HEK293T (cell line): ENCODE measurements at regions of chr4 and their contacts with region 1.

Region 1: DNA sequence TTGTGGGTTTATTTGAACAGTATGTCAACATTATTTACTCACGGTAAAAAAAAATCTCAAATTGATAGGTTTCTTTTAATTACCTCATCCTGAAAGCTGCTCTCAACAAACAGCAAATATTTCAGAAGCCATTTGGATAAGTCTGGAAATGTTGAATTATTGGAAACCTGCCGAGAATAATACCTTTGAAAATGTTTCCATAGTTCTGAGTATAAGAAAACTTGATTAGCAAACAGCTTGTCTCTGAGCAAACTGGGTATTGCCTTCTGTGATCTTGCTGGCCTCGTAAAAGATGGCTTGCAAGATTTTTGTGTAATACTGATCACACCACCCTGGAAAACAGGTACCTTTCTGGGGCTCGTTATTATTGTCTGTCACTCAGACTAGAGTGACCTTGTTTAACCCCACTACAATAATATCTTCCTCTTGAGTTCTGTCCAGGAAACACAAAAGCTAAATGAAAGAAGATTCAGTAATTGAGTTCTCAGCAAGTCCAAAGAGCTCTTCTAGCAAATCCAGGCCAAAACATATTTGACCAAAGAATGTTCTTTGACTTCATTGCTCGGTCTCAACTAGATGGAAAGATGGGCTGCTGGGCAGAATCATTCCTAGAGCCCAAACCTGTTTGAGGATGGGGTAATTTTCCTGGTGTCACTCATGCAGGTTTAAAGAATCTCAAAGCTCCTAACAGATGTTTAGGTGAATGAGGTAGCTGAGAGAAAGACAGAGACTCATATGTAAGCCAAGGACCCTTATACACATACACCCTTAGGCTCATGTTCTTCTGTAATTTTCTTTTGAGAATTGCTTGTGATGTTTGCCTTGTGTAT is 255.6 kb upstream of the JADE1 start:
- DNase-seq: no peak

Region 2: DNA sequence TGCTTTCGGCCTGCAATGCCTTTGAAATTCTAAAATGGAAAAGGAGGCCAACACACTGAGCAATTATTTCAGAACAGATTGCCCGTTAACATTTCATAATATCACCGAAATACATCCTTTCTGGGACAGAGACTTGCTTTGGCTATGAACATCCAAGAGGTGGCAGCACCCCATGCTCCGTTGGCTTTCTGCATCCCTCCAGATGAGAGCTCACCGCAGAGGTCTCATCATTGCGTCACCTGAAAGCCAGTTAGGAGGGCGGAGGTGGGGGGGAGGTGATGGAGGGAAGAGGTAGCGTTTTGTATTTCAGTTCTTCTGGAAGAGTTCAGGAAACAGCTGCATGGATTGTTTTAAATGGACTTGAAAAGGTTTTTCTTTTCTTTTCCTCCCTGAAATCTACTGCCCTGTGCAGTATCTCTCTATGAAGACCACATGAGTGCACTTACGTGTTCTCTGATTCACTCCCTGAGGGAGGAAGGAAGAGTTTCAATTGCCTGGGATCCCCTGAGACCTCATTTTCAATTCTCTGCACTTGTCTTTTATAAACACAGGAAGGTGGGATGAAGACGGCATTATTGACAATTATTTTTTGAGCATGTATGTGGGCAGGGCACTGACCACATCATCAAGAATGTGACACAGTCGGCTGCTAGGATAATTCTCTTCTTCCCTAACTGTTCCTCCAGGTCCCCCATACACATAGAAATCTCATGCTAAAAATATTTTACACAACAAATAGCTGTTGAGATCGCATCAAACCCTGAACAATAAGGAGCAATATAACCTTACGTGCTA is 99.4 kb before region 1 on chr4:
- CTCF ChIA-PET with region 1: interaction called, 4 read pairs
- POLR2A ChIA-PET with region 1: interaction called, 13 read pairs
- DNase-seq: peak; percentile 86

Region 3: DNA sequence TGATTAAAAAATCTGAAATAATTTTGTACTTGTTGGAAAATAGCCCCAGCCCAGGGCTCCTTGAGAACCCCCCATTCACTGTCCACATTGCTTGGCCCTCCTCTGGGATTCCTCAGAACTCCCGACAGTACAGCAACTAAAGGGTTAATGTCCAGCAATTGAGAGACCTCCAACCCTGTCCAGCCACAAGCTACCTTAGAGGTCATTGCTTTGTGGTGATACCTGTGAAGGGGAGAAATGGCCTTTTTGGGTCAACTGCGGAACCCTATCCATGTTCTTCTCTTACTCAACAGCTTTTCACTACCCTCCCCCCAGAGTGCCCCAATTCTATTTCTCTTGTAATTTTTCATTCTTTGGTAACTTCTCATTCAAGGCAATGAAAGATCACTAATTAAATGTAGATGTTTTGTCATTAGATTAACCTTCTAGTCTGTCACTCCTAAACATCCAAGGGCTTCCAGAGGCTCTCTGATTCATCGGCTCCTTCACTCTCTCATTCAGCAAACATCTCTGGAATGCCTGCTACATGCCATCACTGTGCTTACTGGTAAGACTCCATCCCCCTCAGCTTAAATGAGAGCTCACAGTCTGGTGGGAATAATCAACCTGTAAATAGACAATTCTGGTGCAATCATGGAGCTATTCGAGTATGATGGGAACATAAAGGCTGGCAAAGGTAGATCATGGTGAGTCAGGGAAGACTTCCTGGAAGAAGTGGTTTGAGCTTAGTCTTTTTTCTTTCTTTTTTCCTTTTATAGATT is 24.9 kb before region 1 on chr4:
- CTCF ChIA-PET with region 1: no interaction called
- POLR2A ChIA-PET with region 1: interaction called, 12 read pairs
- DNase-seq: no peak

Region 4: GRCh38 chr4:128653517-128654444 is 99.9 kb after region 1 on chr4:
- CTCF ChIA-PET with region 1: no interaction called
- POLR2A ChIA-PET with region 1: no interaction called
- DNase-seq: no peak

Region 5: GRCh38 chr4:128793859-128794672 is 240.2 kb after region 1 on chr4:
- CTCF ChIA-PET with region 1: no interaction called
- POLR2A ChIA-PET with region 1: no interaction called
- DNase-seq: no peak

Region 6: DNA sequence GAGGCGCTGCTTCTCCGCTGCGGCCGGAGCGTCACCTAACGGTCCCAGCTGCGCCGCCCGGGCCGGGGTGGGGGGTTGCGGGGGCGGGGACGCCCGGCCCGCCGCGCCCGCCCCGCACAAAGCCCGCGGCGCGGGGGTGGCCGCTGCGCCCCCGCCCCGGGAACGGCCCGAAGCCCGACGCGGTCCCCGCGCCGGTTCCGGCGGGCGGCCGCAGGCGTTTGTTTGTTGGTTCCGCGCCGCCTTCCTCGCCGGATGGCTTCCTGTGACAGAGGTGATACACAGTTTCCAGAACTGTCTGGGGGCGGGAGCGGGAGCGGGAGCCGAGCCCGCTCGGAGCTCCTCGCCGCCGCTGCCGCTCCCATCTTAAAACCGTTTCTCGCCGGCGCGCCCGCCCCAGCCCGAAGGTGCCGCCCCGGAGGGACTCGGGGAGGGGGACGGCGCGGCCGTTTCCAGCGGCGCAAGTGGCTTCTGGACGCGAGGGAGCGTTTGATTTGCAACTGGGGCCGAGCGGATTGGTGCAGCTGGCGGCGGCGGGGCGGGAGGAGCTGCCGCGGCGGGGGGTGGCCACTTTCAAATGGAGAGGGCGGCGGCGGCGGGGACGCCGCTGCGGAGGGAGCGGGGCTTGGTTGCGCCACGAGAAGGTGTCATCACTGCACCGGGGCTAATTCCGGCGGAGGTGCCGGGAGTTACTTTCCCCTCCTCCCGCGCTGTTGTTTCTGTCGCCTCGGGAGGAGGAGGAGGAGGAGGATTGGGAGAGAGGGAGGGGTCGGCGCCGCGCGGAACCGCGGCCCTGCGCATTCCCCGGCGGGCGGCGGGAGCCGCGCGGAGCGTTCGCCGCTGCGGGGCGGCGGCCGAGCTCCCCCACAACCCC is 257.9 kb after region 1 on chr4:
- CTCF ChIA-PET with region 1: no interaction called
- POLR2A ChIA-PET with region 1: interaction called, 13 read pairs
- DNase-seq: peak; percentile 67